ENCODE measurements at regions of chr2 and their contacts with region 1.

Region 1: DNA sequence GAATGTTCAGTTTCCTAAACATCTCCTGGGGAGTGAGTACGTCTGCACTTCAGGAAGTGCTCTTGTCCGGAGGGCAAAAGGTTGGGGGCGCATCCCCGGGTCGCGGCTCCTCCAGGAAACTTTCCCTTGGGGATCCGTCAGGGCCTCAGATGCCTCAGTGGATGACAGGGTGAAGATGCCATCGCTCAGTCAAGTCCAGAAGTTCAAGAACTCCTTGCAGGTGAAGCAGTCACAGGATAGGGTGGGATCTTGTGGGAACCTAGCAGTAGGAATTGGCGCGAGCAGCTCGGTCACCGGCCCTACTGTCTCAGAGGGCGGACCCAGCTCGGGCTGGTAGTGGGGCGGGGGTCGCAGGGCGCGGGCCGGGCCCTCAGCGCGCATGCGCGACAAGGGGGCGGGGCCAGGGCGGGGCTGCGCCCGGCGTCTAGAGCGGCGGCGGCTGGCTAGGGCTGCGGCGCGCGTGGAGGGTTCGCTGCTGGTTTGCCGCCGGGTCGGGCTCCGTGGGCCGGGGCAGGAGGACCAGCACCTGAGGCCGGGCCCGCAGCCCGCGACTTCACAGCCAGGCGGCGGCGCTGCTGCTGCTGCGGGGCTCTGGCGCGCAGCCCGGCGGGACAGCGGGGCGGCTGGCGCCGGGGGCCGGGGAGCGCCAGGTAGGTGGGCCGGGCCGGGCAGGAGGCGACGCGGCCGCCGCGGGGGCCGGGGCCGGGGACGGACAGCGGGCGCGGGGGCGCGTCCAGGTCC is at the start of gene INPP4A:
- DNase-seq: peak; percentile 85
- H3K4me3 ChIP-seq: peak within 1 kb of the TSS; percentile 55 to 86 (median 66)
- H3K27ac ChIP-seq: peak within 1 kb of the TSS; percentile 76 to 90 (median 82)
- H3K4me1 ChIP-seq: peaks cover 0 to 39% (median 25%) of the 10 kb centered on the region in 4 donors
- H3K27me3 ChIP-seq: no peaks in the 10 kb centered on the region
- CTCF ChIP-seq: no peak
- EP300 ChIP-seq: no peak
- POLR2A ChIP-seq: no peak
- total RNA-seq, gene INPP4A: 30.4 to 49.9 (median 39.9) TPM

Region 2: GRCh38 chr2:98234776-98235175 is 209.8 kb before region 1 on chr2:
- intact Hi-C with region 1: no loop called
- DNase-seq: no peak
- H3K4me3 ChIP-seq: no peak overlapping the region
- H3K27ac ChIP-seq: no peak overlapping the region
- H3K4me1 ChIP-seq: no peaks in the 10 kb centered on the region
- H3K27me3 ChIP-seq: no peaks in the 10 kb centered on the region
- CTCF ChIP-seq: no peak
- EP300 ChIP-seq: no peak
- POLR2A ChIP-seq: no peak

Region 3: GRCh38 chr2:98560256-98560771 is 115.7 kb after region 1 on chr2:
- intact Hi-C with region 1: loop called (anchors 2 kb)
- DNase-seq: peak; percentile 83
- H3K4me3 ChIP-seq: no peak overlapping the region
- H3K27ac ChIP-seq: peak overlapping the region; percentile 74 to 84 (median 79)
- H3K4me1 ChIP-seq: peaks cover 0 to 46% (median 43%) of the 10 kb centered on the region in 4 donors
- H3K27me3 ChIP-seq: no peaks in the 10 kb centered on the region
- CTCF ChIP-seq: no peak
- EP300 ChIP-seq: no peak
- POLR2A ChIP-seq: no peak

Region 4: GRCh38 chr2:98568881-98569793 is 124.5 kb after region 1 on chr2:
- intact Hi-C with region 1: loop called (anchors 2 kb)
- DNase-seq: peak; percentile 34
- H3K4me3 ChIP-seq: no peak overlapping the region
- H3K27ac ChIP-seq: no peak overlapping the region
- H3K4me1 ChIP-seq: no peaks in the 10 kb centered on the region
- H3K27me3 ChIP-seq: no peaks in the 10 kb centered on the region
- CTCF ChIP-seq: peak; percentile 16 to 78 (median 69)
- EP300 ChIP-seq: no peak
- POLR2A ChIP-seq: no peak

Region 5: GRCh38 chr2:98608116-98608999 is 163.8 kb after region 1 on chr2 and contains the starts of genes COA5 and UNC50:
- intact Hi-C with region 1: loop called (anchors 10 kb)
- DNase-seq: peak; percentile 94
- H3K4me3 ChIP-seq: peak within 1 kb of the TSS; percentile 56 to 95 (median 93)
- H3K27ac ChIP-seq: peak within 1 kb of the TSS; percentile 93 to 97 (median 94)
- H3K4me1 ChIP-seq: peaks cover 0 to 60% (median 48%) of the 10 kb centered on the region in 4 donors
- H3K27me3 ChIP-seq: no peaks in the 10 kb centered on the region
- CTCF ChIP-seq: no peak
- EP300 ChIP-seq: peak in 1 of 4 donors; percentile 36
- POLR2A ChIP-seq: peak; percentile 71 to 83
- total RNA-seq, gene COA5: 35.5 to 53.8 (median 43.4) TPM
- total RNA-seq, gene UNC50: 39.4 to 61.0 (median 52.7) TPM

Measured in sigmoid colon (tissue), 7 donors.